ENCODE measurements at regions of chr6 and their contacts with region 1.

Region 1: DNA sequence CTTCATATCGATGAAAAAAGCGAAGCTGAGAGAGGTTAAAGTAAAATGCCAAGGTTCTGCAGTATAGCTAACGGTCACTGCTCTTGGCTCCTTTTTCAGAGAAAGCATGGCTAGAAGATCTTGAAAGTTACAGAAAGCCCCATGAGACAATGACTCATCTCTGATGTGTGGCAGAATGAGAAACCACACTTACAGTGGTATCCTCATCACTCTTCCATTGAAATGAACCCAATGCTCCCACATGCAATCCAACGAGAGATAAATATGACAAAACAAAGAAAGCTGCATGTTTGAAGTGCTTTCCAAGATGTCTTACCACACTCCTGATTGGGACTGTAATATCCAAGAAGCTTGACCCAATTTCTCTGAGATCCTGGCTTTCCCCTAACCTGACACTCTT is 694.9 kb downstream of the PRKN start:
- DNase-seq: peak; percentile 23
- H3K4me3 ChIP-seq: no peak overlapping the region
- H3K27ac ChIP-seq: no peak overlapping the region
- H3K4me1 ChIP-seq: no peaks in the 10 kb centered on the region
- H3K27me3 ChIP-seq: no peaks in the 10 kb centered on the region
- CTCF ChIP-seq: no peak

Region 2: GRCh38 chr6:161984713-161985112 is 47.9 kb before region 1 on chr6:
- CTCF ChIA-PET with region 1: no interaction called
- dilution Hi-C with region 1: loop called (anchors 5 kb)
- in situ Hi-C with region 1: no loop called
- intact Hi-C with region 1: no loop called
- DNase-seq: no peak
- H3K4me3 ChIP-seq: no peak overlapping the region
- H3K27ac ChIP-seq: no peak overlapping the region
- H3K4me1 ChIP-seq: no peaks in the 10 kb centered on the region
- H3K27me3 ChIP-seq: no peaks in the 10 kb centered on the region
- CTCF ChIP-seq: no peak

Region 3: DNA sequence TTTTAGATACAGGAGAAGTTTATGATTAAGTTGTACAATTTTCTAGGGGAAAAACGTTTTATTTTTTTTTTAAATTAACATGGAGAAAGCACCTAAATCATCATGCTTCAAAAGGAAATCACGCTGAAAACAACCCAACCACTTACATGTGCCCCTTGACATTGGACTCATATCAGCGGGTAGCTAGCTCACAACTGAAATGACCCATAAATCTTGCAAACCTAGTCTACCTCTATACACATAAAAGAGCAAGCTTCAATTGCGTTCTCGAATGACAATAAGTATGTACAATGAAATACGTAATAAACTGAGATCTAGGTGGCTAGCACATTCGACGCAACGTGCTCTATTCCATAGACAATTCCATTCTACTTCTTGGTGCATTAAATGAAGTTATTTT is 35.8 kb before region 1 on chr6:
- CTCF ChIA-PET with region 1: no interaction called
- dilution Hi-C with region 1: no loop called
- in situ Hi-C with region 1: no loop called
- intact Hi-C with region 1: loop called (anchors 2 kb)
- DNase-seq: no peak
- H3K4me3 ChIP-seq: no peak overlapping the region
- H3K27ac ChIP-seq: no peak overlapping the region
- H3K4me1 ChIP-seq: no peaks in the 10 kb centered on the region
- H3K27me3 ChIP-seq: peaks cover 3% of the 10 kb centered on the region
- CTCF ChIP-seq: no peak

Region 4: GRCh38 chr6:162109480-162110050 is 76.9 kb after region 1 on chr6:
- CTCF ChIA-PET with region 1: no interaction called
- dilution Hi-C with region 1: no loop called
- in situ Hi-C with region 1: no loop called
- intact Hi-C with region 1: no loop called
- DNase-seq: peak; percentile 49
- H3K4me3 ChIP-seq: no peak overlapping the region
- H3K27ac ChIP-seq: no peak overlapping the region
- H3K4me1 ChIP-seq: peaks cover 4% of the 10 kb centered on the region
- H3K27me3 ChIP-seq: no peaks in the 10 kb centered on the region
- CTCF ChIP-seq: no peak